ENCODE measurements at regions of chr2 and their contacts with region 1.

Region 1: GRCh38 chr2:220687231-220687843 is 884.8 kb downstream of the EPHA4 start:
- DNase-seq: peak; percentile 53

Region 2: GRCh38 chr2:219475697-219476651 is 1211.4 kb before region 1 on chr2:
- in situ Hi-C with region 1: no loop called
- DNase-seq: peak; percentile 78

Region 3: GRCh38 chr2:220434385-220434784 is 253.0 kb before region 1 on chr2:
- in situ Hi-C with region 1: no loop called
- DNase-seq: no peak

Region 4: GRCh38 chr2:221075203-221075602 is 387.9 kb after region 1 on chr2:
- in situ Hi-C with region 1: no loop called
- DNase-seq: no peak

Region 5: DNA sequence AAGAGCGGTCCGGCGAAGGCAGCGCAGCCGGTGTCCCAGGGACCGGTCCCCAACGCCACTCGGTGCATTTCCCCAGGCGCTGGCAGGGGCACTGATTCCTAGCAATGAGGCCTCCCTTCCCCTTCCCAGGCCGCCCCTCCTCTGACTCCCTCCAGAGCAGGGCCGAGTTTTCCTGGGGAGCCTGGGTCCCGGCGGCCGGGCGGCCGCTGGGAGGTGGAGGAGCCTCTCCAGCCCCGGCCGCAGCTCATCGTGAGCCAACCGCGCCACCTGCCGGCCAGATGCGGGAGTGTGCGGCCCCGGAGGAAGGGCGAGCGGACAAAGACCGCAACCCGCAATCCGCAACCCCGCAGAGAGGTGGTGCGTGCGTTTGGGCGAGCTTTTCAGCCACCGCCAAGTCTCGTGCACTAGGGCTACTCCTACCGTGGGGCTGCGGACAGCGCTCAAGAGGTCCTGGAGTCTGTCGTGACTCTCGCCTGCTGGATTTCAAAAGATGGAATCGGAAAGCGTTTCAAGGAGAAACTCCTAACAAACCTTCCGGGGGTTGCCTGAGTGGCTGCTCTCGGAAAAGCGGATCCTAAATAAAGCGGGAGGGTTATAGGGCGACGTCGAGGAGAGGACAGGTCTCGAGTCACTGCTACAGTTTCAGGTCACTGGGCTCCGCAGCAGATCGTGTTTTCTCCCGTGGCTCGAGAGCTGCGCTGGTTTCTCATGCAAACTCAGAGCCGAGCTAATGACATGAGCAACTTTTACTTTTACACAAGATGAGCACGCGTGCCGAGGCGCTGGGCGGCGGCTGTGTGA is 886.3 kb after region 1 on chr2:
- in situ Hi-C with region 1: loop called (anchors 25 kb)
- DNase-seq: peak; percentile 79

Measured in KBM-7 (cell line).